IMR-90 (cell line): ENCODE measurements at regions of chr2 and their contacts with region 1.

Region 1: DNA sequence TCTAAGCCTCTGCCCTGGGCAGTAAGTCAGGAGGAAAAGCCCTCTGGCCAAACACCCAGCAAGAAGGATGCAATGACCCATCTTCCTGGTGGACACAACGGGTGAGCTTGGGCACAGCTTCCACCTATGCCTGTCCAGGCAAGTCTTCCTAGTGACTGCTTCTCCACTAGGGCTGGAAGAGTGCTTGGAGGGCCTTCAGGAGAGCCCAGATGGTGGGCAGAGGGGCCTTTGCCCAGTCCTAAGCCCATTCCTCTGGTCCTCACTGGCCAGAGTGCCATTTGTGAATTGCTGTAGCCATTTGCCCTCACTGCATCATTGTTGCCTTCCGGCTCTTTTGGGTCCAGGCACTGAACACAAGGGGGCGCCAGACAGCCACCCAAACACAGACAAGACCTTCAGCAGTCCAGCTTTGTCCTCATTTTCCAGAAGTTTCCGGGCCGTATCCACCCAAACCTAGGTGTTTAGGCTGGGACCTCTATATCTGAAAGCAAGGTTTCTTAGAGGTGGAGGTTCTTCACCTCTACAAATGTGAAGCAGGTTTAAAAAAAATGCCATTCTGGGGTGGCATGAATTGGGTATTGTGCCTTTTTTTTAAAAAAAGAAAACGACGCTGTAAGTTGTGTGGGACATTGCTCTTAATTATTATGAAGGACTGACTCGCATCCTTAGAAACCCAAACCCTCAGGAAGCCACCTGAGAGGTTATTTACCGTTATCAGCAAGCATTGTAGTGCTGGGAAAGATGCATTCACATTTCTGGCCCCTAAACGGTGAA is 29.5 kb downstream of the PAX8 start:
- DNase-seq: peak; percentile 75
- ATAC-seq: peak; percentile 95
- H3K4me3 ChIP-seq: no peak overlapping the region
- H3K27ac ChIP-seq: no peak overlapping the region
- H3K4me1 ChIP-seq: no peaks in the 10 kb centered on the region
- H3K27me3 ChIP-seq: peaks cover 1% of the 10 kb centered on the region; the same call in 1 of the 2 replicates
- CTCF ChIP-seq: peak; percentile 91
- POLR2A ChIP-seq: no peak
- RAD21 ChIP-seq: peak; percentile 95

Region 2: DNA sequence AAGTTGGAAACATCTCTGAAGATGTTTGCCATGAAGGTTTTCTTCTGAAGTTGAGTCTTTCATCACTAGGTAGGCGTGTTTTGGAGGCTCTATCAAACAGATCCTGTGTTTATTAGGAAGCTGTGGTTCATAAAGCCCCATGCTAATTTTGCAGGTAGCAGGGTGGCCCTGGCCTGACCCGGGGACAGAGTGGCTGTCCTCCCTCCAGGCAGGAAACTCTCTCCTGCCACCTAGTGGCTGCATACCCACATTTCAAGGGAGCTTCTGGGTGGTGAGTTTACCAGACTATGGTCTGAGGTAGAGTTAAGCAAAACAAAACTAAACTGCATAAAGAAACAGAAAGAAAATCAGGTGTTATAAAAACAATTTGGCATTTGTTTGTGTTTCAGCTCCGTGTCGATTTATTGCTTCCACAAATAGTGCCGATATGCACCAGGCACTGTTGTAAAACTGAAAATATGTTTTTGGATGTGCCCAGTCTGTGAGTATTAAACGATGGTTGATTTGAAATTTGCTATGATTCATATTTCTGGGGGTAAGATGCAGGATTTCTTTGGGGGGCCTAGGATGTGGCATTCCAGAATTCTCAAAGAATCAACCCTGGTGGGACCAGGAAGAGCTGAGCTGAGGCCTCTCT is 364.2 kb before region 1 on chr2:
- CTCF ChIA-PET with region 1: no interaction called
- POLR2A ChIA-PET with region 1: no interaction called
- dilution Hi-C with region 1: no loop called
- in situ Hi-C with region 1: no loop called
- intact Hi-C with region 1: no loop called
- DNase-seq: no peak
- ATAC-seq: peak; percentile 28; the same call in 1 of the 2 replicates
- H3K4me3 ChIP-seq: no peak overlapping the region
- H3K27ac ChIP-seq: no peak overlapping the region
- H3K4me1 ChIP-seq: peaks cover 9% of the 10 kb centered on the region
- H3K27me3 ChIP-seq: no peaks in the 10 kb centered on the region
- CTCF ChIP-seq: peak; percentile 63
- POLR2A ChIP-seq: no peak
- RAD21 ChIP-seq: peak; percentile 66

Region 3: GRCh38 chr2:113138428-113139322 is 110.5 kb before region 1 on chr2:
- CTCF ChIA-PET with region 1: interaction called, 8 read pairs
- POLR2A ChIA-PET with region 1: no interaction called
- dilution Hi-C with region 1: no loop called
- in situ Hi-C with region 1: no loop called
- intact Hi-C with region 1: loop called (anchors 1 kb)
- DNase-seq: peak; percentile 66
- ATAC-seq: peak; percentile 75
- H3K4me3 ChIP-seq: no peak overlapping the region
- H3K27ac ChIP-seq: no peak overlapping the region
- H3K4me1 ChIP-seq: no peaks in the 10 kb centered on the region
- H3K27me3 ChIP-seq: peaks cover 14% of the 10 kb centered on the region
- CTCF ChIP-seq: peak; percentile 77
- POLR2A ChIP-seq: no peak
- RAD21 ChIP-seq: peak; percentile 59

Region 4: DNA sequence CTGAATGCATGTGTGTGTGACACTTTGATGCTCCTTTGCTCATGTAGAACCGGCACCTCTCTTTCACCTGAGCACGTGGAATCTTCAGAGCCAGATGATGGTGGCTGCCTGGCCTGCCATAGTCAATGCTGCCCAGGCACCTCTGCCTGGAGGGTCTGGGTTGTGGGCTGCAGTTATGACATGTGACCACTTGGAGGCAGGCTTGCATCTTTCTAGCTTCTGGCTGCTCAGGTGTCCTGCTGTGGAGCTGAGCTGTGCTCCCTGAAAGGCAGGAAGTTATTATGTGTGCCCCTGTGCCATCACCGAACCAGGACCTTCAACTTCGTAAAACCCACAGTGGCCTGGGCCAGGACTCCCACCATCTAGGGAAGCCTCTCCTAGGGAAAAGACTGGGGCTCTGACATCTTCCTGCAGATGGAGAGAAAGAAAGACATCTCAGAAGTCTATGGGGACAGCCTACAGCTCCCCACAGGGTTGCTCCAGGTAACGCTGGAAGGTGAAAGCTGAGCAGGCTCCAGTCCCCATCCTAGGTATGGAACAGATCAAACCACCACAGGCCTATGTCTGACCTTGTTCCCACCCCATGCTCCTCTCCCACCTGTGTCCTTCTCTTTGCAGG is 45.2 kb before region 1 on chr2:
- CTCF ChIA-PET with region 1: interaction called, 19 read pairs
- POLR2A ChIA-PET with region 1: no interaction called
- dilution Hi-C with region 1: no loop called
- in situ Hi-C with region 1: no loop called
- intact Hi-C with region 1: loop called (anchors 1 kb)
- DNase-seq: peak; percentile 68
- ATAC-seq: peak; percentile 83
- H3K4me3 ChIP-seq: no peak overlapping the region
- H3K27ac ChIP-seq: no peak overlapping the region
- H3K4me1 ChIP-seq: peaks cover 4% of the 10 kb centered on the region
- H3K27me3 ChIP-seq: peaks cover 2% of the 10 kb centered on the region; the same call in 1 of the 2 replicates
- CTCF ChIP-seq: peak; percentile 88
- POLR2A ChIP-seq: no peak
- RAD21 ChIP-seq: peak; percentile 92

Region 5: GRCh38 chr2:113328043-113328442 is 78.9 kb after region 1 on chr2:
- CTCF ChIA-PET with region 1: no interaction called
- POLR2A ChIA-PET with region 1: no interaction called
- dilution Hi-C with region 1: no loop called
- in situ Hi-C with region 1: no loop called
- intact Hi-C with region 1: no loop called
- DNase-seq: no peak
- ATAC-seq: no peak
- H3K4me3 ChIP-seq: no peak overlapping the region
- H3K27ac ChIP-seq: no peak overlapping the region
- H3K4me1 ChIP-seq: peaks cover 6% of the 10 kb centered on the region; the same call in 1 of the 2 replicates
- H3K27me3 ChIP-seq: peaks cover 1% of the 10 kb centered on the region; the same call in 1 of the 2 replicates
- CTCF ChIP-seq: no peak
- POLR2A ChIP-seq: no peak
- RAD21 ChIP-seq: no peak

Region 6: GRCh38 chr2:113370478-113371091 is 121.4 kb after region 1 on chr2:
- CTCF ChIA-PET with region 1: interaction called, 12 read pairs
- POLR2A ChIA-PET with region 1: interaction called, 3 read pairs
- dilution Hi-C with region 1: no loop called
- in situ Hi-C with region 1: loop called (anchors 5 kb)
- intact Hi-C with region 1: loop called (anchors 1 kb)
- DNase-seq: peak; percentile 72
- ATAC-seq: peak; percentile 98
- H3K4me3 ChIP-seq: no peak overlapping the region
- H3K27ac ChIP-seq: no peak overlapping the region
- H3K4me1 ChIP-seq: no peaks in the 10 kb centered on the region
- H3K27me3 ChIP-seq: peaks cover 15% of the 10 kb centered on the region
- CTCF ChIP-seq: peak; percentile 82
- POLR2A ChIP-seq: no peak
- RAD21 ChIP-seq: peak; percentile 91

Region 7: DNA sequence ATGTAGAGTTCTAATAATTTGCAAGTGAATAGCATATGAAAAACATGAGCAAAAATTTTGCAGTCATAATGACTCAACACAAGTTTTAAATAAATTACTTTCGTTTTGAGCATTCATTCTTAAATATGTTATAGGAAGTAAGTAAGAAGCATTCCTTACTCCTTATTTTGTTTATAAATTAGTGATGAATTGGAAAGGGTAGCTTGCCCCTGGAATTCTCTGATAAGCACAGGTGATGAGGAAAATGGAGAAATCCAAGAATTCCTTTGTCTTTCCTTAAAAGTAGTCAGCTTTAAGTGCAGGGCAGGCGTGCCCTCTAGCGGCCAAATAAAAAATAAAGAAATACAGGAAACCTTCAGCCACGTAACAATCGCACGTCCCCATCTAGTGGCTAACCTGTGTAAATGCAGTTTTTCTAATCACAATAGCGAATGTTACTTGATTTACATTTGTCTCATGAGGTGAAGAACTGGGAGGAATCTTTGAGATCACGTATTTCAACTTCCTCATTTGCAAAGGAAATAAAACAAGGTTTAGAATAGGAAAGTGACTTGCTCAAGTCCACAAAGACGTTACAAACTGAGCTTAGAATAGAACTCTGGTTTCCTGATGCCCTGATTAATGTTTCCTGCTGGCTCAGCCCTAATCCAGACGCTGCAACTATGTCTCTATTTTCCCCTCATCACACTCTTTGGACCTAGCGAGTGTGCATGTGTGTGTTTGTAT is 141.1 kb after region 1 on chr2:
- CTCF ChIA-PET with region 1: interaction called, 6 read pairs
- POLR2A ChIA-PET with region 1: no interaction called
- dilution Hi-C with region 1: no loop called
- in situ Hi-C with region 1: no loop called
- intact Hi-C with region 1: loop called (anchors 1 kb)
- DNase-seq: peak; percentile 79
- ATAC-seq: peak; percentile 99
- H3K4me3 ChIP-seq: peak overlapping the region; percentile 16; the same call in 1 of the 2 replicates
- H3K27ac ChIP-seq: no peak overlapping the region
- H3K4me1 ChIP-seq: no peaks in the 10 kb centered on the region
- H3K27me3 ChIP-seq: peaks cover 8% of the 10 kb centered on the region
- CTCF ChIP-seq: peak; percentile 99
- POLR2A ChIP-seq: no peak
- RAD21 ChIP-seq: peak; percentile 80